ENCODE measurements at regions of chr12 and their contacts with region 1.

Region 1: GRCh38 chr12:13278249-13278787 is 81.8 kb downstream of the EMP1 start:
- DNase-seq: peak; percentile 84
- ATAC-seq: peak; percentile 99

Region 2: DNA sequence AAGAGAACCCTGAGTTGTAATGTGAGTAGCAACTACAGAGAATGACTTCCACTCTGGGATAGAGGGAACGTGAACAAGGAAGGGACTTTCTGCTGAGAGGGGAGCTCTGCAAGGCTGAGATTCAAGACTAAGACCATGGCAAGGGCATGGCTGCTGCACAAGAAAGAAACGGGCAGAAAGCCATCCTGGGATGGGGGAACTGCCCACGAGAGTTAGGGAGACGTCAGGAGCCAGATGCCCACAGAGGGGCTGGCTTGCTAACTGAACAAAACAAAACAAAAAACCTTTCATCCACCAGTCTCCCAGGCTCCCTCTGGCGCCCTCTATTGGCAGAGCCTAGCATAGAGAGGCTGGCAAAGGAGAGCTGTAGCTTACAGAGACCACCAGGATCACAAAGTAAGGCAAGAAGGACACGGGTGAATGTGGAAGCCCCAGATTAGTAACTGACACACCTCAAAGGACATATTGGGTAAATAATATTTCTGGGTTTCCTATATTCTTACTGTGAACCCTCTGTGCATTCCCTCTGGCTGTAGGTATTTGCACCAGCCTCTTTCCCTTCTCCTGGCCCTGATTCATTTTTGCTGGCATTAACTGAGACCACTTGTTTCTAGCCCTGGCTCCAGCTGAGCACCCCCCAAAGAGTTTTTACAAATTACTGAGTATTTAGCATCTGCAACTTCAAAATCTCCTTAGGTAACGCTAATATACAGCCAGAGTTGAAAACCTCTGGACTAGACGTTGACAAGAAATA is 256.5 kb after region 1 on chr12:
- intact Hi-C with region 1: loop called (anchors 5 kb)
- DNase-seq: peak; percentile 83
- ATAC-seq: peak; percentile 77

Region 3: GRCh38 chr12:13661005-13661887 is 382.9 kb after region 1 on chr12:
- intact Hi-C with region 1: loop called (anchors 2 kb)
- DNase-seq: peak; percentile 49
- ATAC-seq: peak; percentile 87